ENCODE measurements at regions of chr4 and their contacts with region 1.

Region 1: DNA sequence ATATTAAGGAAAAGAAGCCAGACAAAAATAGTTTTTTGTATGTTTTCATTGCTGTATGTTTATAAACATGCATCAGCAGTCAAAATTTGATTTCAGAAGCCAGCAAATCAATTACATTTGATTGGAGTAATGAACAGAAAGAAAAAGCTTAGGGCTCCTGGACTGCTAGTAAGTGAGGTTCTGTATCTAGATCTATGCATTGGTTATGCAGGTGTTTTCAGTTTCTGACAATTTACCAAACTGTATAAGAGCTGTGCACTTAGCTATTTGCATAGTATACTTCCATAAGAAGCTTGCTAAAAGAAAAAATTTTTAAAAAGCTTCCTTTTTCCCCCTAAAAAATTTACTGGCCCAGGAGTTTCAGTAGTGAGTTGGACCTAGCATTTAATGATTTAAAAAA is 881.6 kb downstream of the PCDH7 start:
- DNase-seq: no peak
- H3K4me3 Mint-ChIP-seq: no peak overlapping the region
- H3K27ac Mint-ChIP-seq: no peak overlapping the region
- H3K4me1 Mint-ChIP-seq: no peaks in the 10 kb centered on the region
- H3K27me3 Mint-ChIP-seq: no peaks in the 10 kb centered on the region
- CTCF ChIP-seq: no peak

Region 2: DNA sequence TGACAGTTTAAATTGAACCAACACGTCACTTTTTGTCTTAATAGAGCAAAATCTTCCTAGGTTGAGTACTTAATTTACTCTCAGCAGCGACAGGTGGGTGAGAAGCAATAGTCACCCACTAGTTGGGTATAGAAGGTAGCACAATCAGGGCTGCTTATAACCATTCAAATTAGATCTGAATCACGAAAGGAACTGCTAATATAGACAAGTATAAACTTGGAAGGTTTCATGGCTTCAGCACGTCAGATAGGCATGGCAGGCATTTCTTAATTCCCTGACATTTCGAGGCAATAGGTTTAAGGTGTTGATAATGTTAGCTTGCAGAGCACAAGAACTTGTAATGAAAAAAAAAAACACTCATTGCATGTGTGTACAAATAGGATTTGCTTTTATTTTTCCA is 28.2 kb before region 1 on chr4:
- CTCF ChIA-PET with region 1: no interaction called
- POLR2A ChIA-PET with region 1: no interaction called
- intact Hi-C with region 1: loop called (anchors 2 kb)
- DNase-seq: no peak
- H3K4me3 Mint-ChIP-seq: no peak overlapping the region
- H3K27ac Mint-ChIP-seq: no peak overlapping the region
- H3K4me1 Mint-ChIP-seq: no peaks in the 10 kb centered on the region
- H3K27me3 Mint-ChIP-seq: no peaks in the 10 kb centered on the region
- CTCF ChIP-seq: no peak